ENCODE measurements at regions of chr1 and their contacts with region 1.

Region 1: GRCh38 chr1:33111970-33112369 is 31.0 kb downstream of the AZIN2 start:
- DNase-seq: no peak
- H3K4me3 ChIP-seq: no peak overlapping the region
- H3K27me3 ChIP-seq: no peaks in the 10 kb centered on the region
- CTCF ChIP-seq: peak; percentile 43

Region 2: GRCh38 chr1:32592943-32593342 is 519.0 kb before region 1 on chr1:
- CTCF ChIA-PET with region 1: no interaction called
- POLR2A ChIA-PET with region 1: no interaction called
- DNase-seq: no peak
- H3K4me3 ChIP-seq: no peak overlapping the region
- H3K27me3 ChIP-seq: no peaks in the 10 kb centered on the region
- CTCF ChIP-seq: no peak

Region 3: GRCh38 chr1:33127001-33127791 is 15.2 kb after region 1 on chr1:
- CTCF ChIA-PET with region 1: interaction called, 15 read pairs
- POLR2A ChIA-PET with region 1: no interaction called
- DNase-seq: peak; percentile 98
- H3K4me3 ChIP-seq: peak overlapping the region; percentile 62
- H3K27me3 ChIP-seq: no peaks in the 10 kb centered on the region
- CTCF ChIP-seq: peak; percentile 98

Region 4: DNA sequence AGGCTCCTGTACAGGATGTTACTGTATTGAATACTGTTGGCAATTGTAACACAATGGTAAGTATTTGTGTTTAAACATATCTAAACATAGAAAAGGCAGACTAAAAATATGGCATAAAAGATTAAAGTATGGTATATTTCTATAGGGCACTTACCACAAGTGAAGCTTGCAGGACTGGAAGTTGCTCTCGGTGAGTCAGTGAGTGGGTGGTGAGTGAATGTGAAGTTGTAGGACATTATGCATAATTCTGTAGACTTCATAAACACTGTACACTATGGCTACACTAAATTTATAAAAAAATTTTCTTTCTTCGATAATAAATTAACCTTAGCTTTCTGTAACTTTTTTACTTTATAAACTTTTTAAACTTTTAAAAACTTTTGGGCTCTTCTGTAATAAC is 83.6 kb after region 1 on chr1:
- CTCF ChIA-PET with region 1: no interaction called
- POLR2A ChIA-PET with region 1: no interaction called
- DNase-seq: no peak
- H3K4me3 ChIP-seq: no peak overlapping the region
- H3K27me3 ChIP-seq: peaks cover 5% of the 10 kb centered on the region
- CTCF ChIP-seq: no peak